Activated naive CD4-positive, alpha-beta T cell treated with anti-CD3 and anti-CD28 coated beads for 36 hours (primary cell): ENCODE measurements at regions of chr11 and their contacts with region 1.

Region 1: GRCh38 chr11:9460322-9461067 is at the start of gene ZNF143:
- DNase-seq: peak; percentile 100
- H3K4me3 Mint-ChIP-seq: peak within 1 kb of the TSS; percentile 96
- H3K27ac Mint-ChIP-seq: peak within 1 kb of the TSS; percentile 99
- H3K4me1 Mint-ChIP-seq: peaks cover 27% of the 10 kb centered on the region
- H3K27me3 Mint-ChIP-seq: no peaks in the 10 kb centered on the region
- total RNA-seq, gene ZNF143: 39.1 to 42.5 TPM

Region 2: DNA sequence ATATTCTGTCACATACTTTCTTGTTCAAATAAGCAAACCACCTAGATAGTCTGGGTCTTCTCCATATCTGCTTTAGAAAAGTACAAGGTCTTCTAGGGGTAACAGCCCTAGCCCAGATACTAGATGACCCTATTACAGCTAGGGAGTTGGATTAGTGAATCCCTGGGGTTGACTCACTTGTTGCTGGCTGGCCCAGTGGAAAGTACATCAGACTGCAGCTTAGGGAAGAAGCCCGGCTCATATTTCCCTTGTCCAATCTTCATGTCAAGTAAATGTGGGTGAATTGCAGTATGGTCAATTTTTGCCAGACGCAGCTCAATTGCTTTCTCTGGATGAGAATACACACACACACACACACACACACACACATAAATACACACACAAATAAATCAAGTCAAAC is 290.0 kb before region 1 on chr11:
- CTCF ChIA-PET with region 1: no interaction called
- intact Hi-C with region 1: loop called (anchors 1 kb)
- DNase-seq: no peak
- H3K4me3 Mint-ChIP-seq: no peak overlapping the region
- H3K27ac Mint-ChIP-seq: no peak overlapping the region
- H3K4me1 Mint-ChIP-seq: peaks cover 15% of the 10 kb centered on the region
- H3K27me3 Mint-ChIP-seq: no peaks in the 10 kb centered on the region

Region 3: DNA sequence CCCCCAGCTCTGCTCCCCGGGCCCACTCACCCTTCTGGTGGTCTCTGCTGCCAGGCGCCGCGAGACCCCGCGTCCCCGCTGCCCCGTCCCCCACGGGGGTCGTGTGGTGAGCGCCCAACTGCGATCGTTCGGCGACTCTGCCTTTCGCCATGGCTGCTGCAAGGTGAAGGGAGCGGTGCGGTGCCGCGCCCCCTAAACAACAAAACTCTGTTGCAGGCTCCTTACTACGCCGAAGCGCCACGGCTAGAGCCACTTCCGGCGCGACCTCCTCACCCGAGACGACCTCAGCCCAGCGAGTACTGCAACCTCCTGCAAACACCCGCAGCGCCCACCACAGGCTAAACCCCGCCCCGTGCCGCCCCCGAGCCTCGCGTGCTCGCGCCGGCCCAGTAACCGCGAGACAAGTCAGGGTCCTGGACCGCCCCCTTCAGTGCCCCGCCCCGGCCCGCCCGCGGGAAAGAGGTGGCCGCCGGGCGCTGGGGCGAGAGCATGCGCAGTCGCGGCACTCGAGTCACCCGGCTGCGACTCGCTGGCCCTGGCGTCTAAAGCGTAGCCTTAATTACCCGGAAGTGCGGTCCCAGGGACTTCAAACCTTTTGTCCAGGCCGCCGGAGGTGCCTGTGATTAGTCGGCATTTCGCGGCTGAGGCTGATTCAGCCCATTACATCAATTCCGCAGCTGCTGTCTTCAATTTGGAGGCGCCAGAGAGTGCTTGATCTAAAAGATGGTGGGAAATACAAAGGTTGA is 146.0 kb before region 1 on chr11 and contains the start of gene TMEM41B:
- CTCF ChIA-PET with region 1: interaction called, 3 read pairs
- intact Hi-C with region 1: loop called (anchors 1 kb)
- DNase-seq: peak; percentile 99
- H3K4me3 Mint-ChIP-seq: peak within 1 kb of the TSS; percentile 99
- H3K27ac Mint-ChIP-seq: peak within 1 kb of the TSS; percentile 92
- H3K4me1 Mint-ChIP-seq: peaks cover 37% of the 10 kb centered on the region
- H3K27me3 Mint-ChIP-seq: peaks cover 13% of the 10 kb centered on the region
- total RNA-seq, gene TMEM41B: 27.8 to 30.5 TPM

Region 4: GRCh38 chr11:9573052-9573774 is 112.7 kb after region 1 on chr11 and contains the start of gene WEE1:
- CTCF ChIA-PET with region 1: no interaction called
- intact Hi-C with region 1: loop called (anchors 1 kb)
- DNase-seq: peak; percentile 99
- H3K4me3 Mint-ChIP-seq: peak within 1 kb of the TSS; percentile 93
- H3K27ac Mint-ChIP-seq: peak within 1 kb of the TSS; percentile 77
- H3K4me1 Mint-ChIP-seq: peaks cover 27% of the 10 kb centered on the region
- H3K27me3 Mint-ChIP-seq: peaks cover 10% of the 10 kb centered on the region
- total RNA-seq, gene WEE1: 41.8 to 46.6 TPM

Region 5: GRCh38 chr11:9726321-9727022 is 266.0 kb after region 1 on chr11:
- CTCF ChIA-PET with region 1: no interaction called
- intact Hi-C with region 1: no loop called
- DNase-seq: no peak
- H3K4me3 Mint-ChIP-seq: no peak overlapping the region
- H3K27ac Mint-ChIP-seq: no peak overlapping the region
- H3K4me1 Mint-ChIP-seq: no peaks in the 10 kb centered on the region
- H3K27me3 Mint-ChIP-seq: no peaks in the 10 kb centered on the region

Region 6: DNA sequence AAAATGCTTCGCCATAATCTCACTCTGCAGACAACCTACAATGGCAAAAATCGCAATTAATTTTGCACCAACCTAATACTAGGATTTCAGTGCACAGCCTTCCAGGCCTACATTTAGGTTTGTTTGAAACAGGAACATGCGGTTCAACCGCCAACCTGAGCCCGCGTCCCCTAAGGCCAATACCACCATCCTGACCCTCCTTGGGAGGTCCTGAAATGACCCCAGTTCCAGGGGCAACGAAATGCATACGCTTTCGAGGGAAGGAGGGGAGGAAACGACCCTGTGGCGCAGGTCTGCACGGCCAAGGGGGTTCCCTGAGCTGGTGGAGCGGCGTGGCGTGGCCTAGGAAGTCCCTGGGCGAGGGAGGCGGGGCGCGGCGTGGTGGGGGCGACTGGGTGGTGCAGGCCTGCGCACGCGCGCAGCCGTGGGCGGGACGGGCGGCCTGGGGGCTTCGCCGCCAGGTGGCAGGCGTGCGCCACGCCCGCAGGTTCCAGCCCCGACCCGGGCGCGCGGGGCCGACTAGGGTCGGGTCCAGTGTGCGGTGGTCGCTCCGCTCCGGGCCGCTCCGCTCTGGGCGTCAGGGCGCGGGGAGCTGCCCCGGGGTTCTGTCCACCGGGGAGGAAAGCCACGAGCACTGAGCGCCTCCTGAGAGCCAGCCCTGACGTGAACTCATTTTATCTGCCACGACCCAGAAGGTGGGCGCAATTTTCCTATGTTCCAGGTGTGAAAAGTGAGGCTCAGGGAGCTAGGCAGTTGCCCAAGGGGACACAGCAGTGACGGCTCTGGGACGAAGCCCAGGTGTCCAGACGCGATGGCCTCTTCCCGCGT is 297.5 kb after region 1 on chr11:
- CTCF ChIA-PET with region 1: no interaction called
- intact Hi-C with region 1: loop called (anchors 1 kb)
- DNase-seq: peak; percentile 94
- H3K4me3 Mint-ChIP-seq: peak overlapping the region; percentile 73
- H3K27ac Mint-ChIP-seq: peak overlapping the region; percentile 81
- H3K4me1 Mint-ChIP-seq: peaks cover 42% of the 10 kb centered on the region
- H3K27me3 Mint-ChIP-seq: no peaks in the 10 kb centered on the region

Region 7: DNA sequence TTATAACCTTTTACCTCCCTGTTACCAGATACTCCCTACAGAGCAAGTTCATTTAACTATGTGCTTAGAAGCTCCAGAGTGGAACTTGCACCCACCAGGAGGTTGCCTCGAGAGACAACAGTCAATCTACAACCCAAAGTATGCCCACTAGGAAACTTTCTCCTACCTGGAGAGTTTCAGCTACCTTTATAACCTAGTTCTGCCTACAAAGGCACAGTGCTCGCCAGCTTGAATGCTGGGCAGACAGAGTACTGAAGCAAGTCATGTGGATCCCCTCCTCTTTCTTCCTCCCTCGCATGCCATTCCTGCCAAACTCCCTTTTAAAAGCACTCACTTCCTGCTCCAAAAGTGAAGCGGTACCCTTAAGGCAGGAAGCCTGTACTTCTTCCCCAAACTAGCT is 462.3 kb after region 1 on chr11:
- CTCF ChIA-PET with region 1: no interaction called
- intact Hi-C with region 1: no loop called
- DNase-seq: no peak
- H3K4me3 Mint-ChIP-seq: no peak overlapping the region
- H3K27ac Mint-ChIP-seq: no peak overlapping the region
- H3K4me1 Mint-ChIP-seq: no peaks in the 10 kb centered on the region
- H3K27me3 Mint-ChIP-seq: no peaks in the 10 kb centered on the region

Region 8: GRCh38 chr11:10857709-10858438 is 1397.4 kb after region 1 on chr11 and contains the start of gene ZBED5:
- CTCF ChIA-PET with region 1: no interaction called
- intact Hi-C with region 1: loop called (anchors 2 kb)
- DNase-seq: peak; percentile 96
- H3K4me3 Mint-ChIP-seq: peak within 1 kb of the TSS; percentile 100
- H3K27ac Mint-ChIP-seq: peak within 1 kb of the TSS; percentile 100
- H3K4me1 Mint-ChIP-seq: peaks cover 46% of the 10 kb centered on the region
- H3K27me3 Mint-ChIP-seq: no peaks in the 10 kb centered on the region
- total RNA-seq, gene ZBED5: 50.4 to 52.4 TPM